ENCODE measurements at regions of chr19 and their contacts with region 1.

Region 1: GRCh38 chr19:4723367-4724187 is at the start of gene DPP9:
- DNase-seq: peak; percentile 97
- ATAC-seq: peak; percentile 91
- H3K4me3 ChIP-seq: peak within 1 kb of the TSS; percentile 78 to 100 (median 99)
- H3K27ac ChIP-seq: peak within 1 kb of the TSS; percentile 57
- H3K4me1 ChIP-seq: peaks cover 48% of the 10 kb centered on the region
- H3K27me3 ChIP-seq: no peaks in the 10 kb centered on the region; a peak in 1 of 5 replicates
- CTCF ChIP-seq: peak; percentile 92
- EP300 ChIP-seq: peak in 1 of 2 experiments; percentile 27; a peak in 1 of 4 replicates
- POLR2A ChIP-seq: peak; percentile 21 to 65; a peak in 3 of 4 replicates
- RAD21 ChIP-seq: peak; percentile 76
- total RNA-seq, gene DPP9: 25.8 and 26.6 TPM in 2 replicates

Region 2: GRCh38 chr19:4669723-4670480 is 53.7 kb before region 1 on chr19 and contains the start of gene MYDGF:
- CTCF ChIA-PET with region 1: no interaction called
- POLR2A ChIA-PET with region 1: interaction called, 5 read pairs
- in situ Hi-C with region 1: no loop called
- intact Hi-C with region 1: loop called (anchors 5 kb)
- DNase-seq: peak; percentile 70
- ATAC-seq: peak; percentile 91
- H3K4me3 ChIP-seq: peak within 1 kb of the TSS; percentile 76 to 97 (median 80)
- H3K27ac ChIP-seq: peak within 1 kb of the TSS; percentile 97
- H3K4me1 ChIP-seq: peaks cover 28% of the 10 kb centered on the region
- H3K27me3 ChIP-seq: no peaks in the 10 kb centered on the region; a peak in 1 of 5 replicates
- CTCF ChIP-seq: no peak
- EP300 ChIP-seq: no peak
- POLR2A ChIP-seq: peak; percentile 86 to 89
- RAD21 ChIP-seq: no peak; the same call in 1 of the 2 replicates
- total RNA-seq, gene MYDGF: 51.2 and 116 TPM in 2 replicates

Region 3: GRCh38 chr19:4768934-4769777 is 45.6 kb after region 1 on chr19:
- CTCF ChIA-PET with region 1: no interaction called
- POLR2A ChIA-PET with region 1: no interaction called
- in situ Hi-C with region 1: no loop called
- intact Hi-C with region 1: no loop called
- DNase-seq: peak; percentile 85
- ATAC-seq: peak; percentile 65
- H3K4me3 ChIP-seq: no peak overlapping the region
- H3K27ac ChIP-seq: no peak overlapping the region
- H3K4me1 ChIP-seq: no peaks in the 10 kb centered on the region
- H3K27me3 ChIP-seq: no peaks in the 10 kb centered on the region; a peak in 1 of 5 replicates
- CTCF ChIP-seq: peak; percentile 26
- EP300 ChIP-seq: no peak; a peak in 1 of 4 replicates
- POLR2A ChIP-seq: no peak
- RAD21 ChIP-seq: peak; percentile 86